ENCODE measurements at regions of chr17 and their contacts with region 1.

Region 1: GRCh38 chr17:46940621-46941404 is 17.9 kb downstream of the GOSR2 start:
- DNase-seq: peak; percentile 91
- H3K4me3 Mint-ChIP-seq: no peak overlapping the region
- H3K27ac Mint-ChIP-seq: no peak overlapping the region
- H3K4me1 Mint-ChIP-seq: peaks cover 9% of the 10 kb centered on the region
- H3K27me3 Mint-ChIP-seq: no peaks in the 10 kb centered on the region

Region 2: GRCh38 chr17:46841561-46842379 is 99.0 kb before region 1 on chr17:
- intact Hi-C with region 1: loop called (anchors 10 kb)
- DNase-seq: peak; percentile 76
- H3K4me3 Mint-ChIP-seq: no peak overlapping the region
- H3K27ac Mint-ChIP-seq: no peak overlapping the region
- H3K4me1 Mint-ChIP-seq: no peaks in the 10 kb centered on the region
- H3K27me3 Mint-ChIP-seq: peaks cover 21% of the 10 kb centered on the region

Region 3: GRCh38 chr17:46901291-46901690 is 39.5 kb before region 1 on chr17:
- intact Hi-C with region 1: no loop called
- DNase-seq: no peak
- H3K4me3 Mint-ChIP-seq: no peak overlapping the region
- H3K27ac Mint-ChIP-seq: no peak overlapping the region
- H3K4me1 Mint-ChIP-seq: peaks cover 5% of the 10 kb centered on the region
- H3K27me3 Mint-ChIP-seq: peaks cover 8% of the 10 kb centered on the region

Region 4: DNA sequence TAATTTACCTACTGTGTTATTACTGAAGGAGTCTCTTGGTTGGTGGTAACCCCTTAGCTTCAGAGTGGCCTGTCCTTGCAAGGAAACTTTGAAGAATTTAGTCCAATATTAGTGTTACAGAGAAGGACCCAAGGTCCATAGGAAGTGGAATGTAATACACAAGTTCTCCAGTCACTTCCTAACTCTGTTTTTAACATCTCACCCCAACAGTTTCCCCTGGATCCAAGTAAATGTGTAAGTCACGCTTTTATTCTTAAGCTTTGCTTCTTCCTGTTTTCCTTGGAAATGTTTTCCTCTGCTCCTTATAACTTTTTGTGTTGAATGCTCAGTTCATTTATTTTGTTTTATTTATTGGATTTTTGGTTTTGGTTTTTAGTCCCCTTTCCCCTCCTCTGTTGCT is 64.1 kb after region 1 on chr17:
- intact Hi-C with region 1: loop called (anchors 5 kb)
- DNase-seq: no peak
- H3K4me3 Mint-ChIP-seq: no peak overlapping the region
- H3K27ac Mint-ChIP-seq: no peak overlapping the region
- H3K4me1 Mint-ChIP-seq: peaks cover 4% of the 10 kb centered on the region
- H3K27me3 Mint-ChIP-seq: no peaks in the 10 kb centered on the region

Measured in activated CD4-positive, alpha-beta T cell treated with anti-CD3 and anti-CD28 coated beads, Interleukin-2, amount 10 ng/mL, durations not matched to agents 24 days and 14 days (primary cell).